ENCODE measurements at regions of chr12 and their contacts with region 1.

Region 1: GRCh38 chr12:45543906-45544315 is 185.6 kb upstream of the ARID2 start:
- DNase-seq: peak; percentile 42 to 55
- H3K4me3 ChIP-seq: no peak overlapping the region
- H3K27ac ChIP-seq: no peak overlapping the region
- H3K4me1 ChIP-seq: no peaks in the 10 kb centered on the region
- H3K27me3 ChIP-seq: no peaks in the 10 kb centered on the region
- CTCF ChIP-seq: peak; percentile 87

Region 2: DNA sequence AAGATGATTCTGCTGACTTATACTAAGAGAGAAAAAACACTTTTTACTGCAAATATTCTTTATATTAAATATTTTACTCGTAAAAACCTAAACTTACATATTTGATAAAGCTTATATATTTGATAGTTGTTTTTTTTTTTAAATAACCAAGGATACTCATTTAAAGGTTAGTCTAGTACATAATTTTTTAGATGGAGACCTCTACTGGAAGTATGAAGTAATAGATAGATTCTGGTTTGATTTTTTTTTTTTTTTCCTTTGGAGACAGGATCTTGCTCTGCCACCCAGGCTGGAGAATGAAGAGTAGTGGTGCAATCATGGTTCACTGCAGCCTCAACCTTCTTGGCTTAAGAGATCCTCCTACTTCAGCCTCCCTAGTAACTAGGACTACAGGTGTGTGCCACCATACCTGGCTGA is 202.0 kb after region 1 on chr12:
- CTCF ChIA-PET with region 1: interaction called, 5 read pairs
- POLR2A ChIA-PET with region 1: no interaction called
- intact Hi-C with region 1: loop called (anchors 5 kb)
- DNase-seq: peak in 1 of 2 experiments; percentile 42
- H3K4me3 ChIP-seq: no peak overlapping the region
- H3K27ac ChIP-seq: no peak overlapping the region
- H3K4me1 ChIP-seq: peaks cover 14% of the 10 kb centered on the region; the same call in 1 of the 2 replicates
- H3K27me3 ChIP-seq: no peaks in the 10 kb centered on the region
- CTCF ChIP-seq: peak; percentile 58

Measured in PC-9 (cell line).